Calu3 (cell line): ENCODE measurements at regions of chr22 and their contacts with region 1.

Region 1: GRCh38 chr22:32202539-32203180 is 2.2 kb downstream of the RFPL2 start:
- DNase-seq: peak; percentile 79
- H3K4me3 Mint-ChIP-seq: peak overlapping the region; percentile 84
- H3K27ac Mint-ChIP-seq: no peak overlapping the region
- H3K4me1 Mint-ChIP-seq: peaks cover 54% of the 10 kb centered on the region
- H3K27me3 Mint-ChIP-seq: peaks cover 33% of the 10 kb centered on the region
- CTCF ChIP-seq: peak; percentile 53

Region 2: GRCh38 chr22:31977141-31977841 is 225.4 kb before region 1 on chr22:
- CTCF ChIA-PET with region 1: no interaction called
- intact Hi-C with region 1: loop called (anchors 2 kb)
- DNase-seq: peak; percentile 91
- H3K4me3 Mint-ChIP-seq: no peak overlapping the region
- H3K27ac Mint-ChIP-seq: peak overlapping the region; percentile 3
- H3K4me1 Mint-ChIP-seq: peaks cover 32% of the 10 kb centered on the region
- H3K27me3 Mint-ChIP-seq: no peaks in the 10 kb centered on the region
- CTCF ChIP-seq: peak; percentile 89

Region 3: DNA sequence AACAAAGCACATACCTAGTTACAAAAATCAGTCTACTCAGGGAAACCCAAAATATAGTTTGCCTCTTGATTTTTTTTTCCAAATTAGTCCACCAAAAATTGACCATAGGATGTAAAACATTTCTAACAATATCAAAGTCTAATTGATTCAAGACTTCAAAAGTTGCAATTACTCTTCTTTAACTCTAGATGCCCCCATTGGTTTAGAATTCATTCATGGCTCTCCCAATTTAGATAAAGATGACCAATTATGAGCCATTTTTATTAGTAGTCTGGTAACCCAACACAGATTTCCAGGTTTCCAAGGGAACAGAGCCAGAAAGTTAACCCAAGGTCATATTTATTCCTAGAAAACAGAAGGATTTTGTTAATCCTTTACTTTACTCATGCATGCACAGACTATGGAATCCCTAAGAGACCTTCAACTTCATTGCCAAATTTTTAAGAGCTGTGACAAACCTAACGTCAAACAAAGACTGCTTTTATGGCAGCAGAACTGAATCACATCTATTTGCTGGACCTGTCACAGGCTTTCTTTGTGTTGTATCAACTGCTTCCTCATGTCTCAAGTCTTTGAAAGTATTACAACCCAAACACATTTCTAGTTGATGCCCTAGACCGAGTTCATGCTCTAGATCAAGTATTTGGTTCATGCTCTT is 98.9 kb before region 1 on chr22:
- CTCF ChIA-PET with region 1: interaction called, 5 read pairs
- intact Hi-C with region 1: loop called (anchors 1 kb)
- DNase-seq: no peak
- H3K4me3 Mint-ChIP-seq: no peak overlapping the region
- H3K27ac Mint-ChIP-seq: no peak overlapping the region
- H3K4me1 Mint-ChIP-seq: peaks cover 18% of the 10 kb centered on the region
- H3K27me3 Mint-ChIP-seq: no peaks in the 10 kb centered on the region
- CTCF ChIP-seq: peak; percentile 40

Region 4: DNA sequence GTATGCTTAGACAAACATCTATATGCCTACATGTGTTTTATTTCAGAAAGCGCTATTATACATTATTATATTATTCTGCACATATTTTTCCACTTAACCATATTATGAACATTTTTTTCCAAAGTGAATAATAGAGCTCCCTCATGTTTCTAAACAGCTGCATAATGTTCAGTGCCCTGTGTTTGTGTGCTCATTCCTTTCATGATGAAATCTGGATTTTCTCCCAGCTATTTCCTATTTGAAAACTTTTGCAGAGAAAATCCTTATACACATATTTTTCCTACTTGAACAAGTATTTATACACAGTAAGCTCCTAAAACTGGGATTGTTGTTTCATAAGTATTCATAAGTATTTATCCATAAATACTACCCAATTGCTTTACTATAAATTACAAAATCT is 20.3 kb after region 1 on chr22:
- CTCF ChIA-PET with region 1: no interaction called
- intact Hi-C with region 1: no loop called
- DNase-seq: no peak
- H3K4me3 Mint-ChIP-seq: no peak overlapping the region
- H3K27ac Mint-ChIP-seq: no peak overlapping the region
- H3K4me1 Mint-ChIP-seq: no peaks in the 10 kb centered on the region
- H3K27me3 Mint-ChIP-seq: no peaks in the 10 kb centered on the region
- CTCF ChIP-seq: no peak

Region 5: DNA sequence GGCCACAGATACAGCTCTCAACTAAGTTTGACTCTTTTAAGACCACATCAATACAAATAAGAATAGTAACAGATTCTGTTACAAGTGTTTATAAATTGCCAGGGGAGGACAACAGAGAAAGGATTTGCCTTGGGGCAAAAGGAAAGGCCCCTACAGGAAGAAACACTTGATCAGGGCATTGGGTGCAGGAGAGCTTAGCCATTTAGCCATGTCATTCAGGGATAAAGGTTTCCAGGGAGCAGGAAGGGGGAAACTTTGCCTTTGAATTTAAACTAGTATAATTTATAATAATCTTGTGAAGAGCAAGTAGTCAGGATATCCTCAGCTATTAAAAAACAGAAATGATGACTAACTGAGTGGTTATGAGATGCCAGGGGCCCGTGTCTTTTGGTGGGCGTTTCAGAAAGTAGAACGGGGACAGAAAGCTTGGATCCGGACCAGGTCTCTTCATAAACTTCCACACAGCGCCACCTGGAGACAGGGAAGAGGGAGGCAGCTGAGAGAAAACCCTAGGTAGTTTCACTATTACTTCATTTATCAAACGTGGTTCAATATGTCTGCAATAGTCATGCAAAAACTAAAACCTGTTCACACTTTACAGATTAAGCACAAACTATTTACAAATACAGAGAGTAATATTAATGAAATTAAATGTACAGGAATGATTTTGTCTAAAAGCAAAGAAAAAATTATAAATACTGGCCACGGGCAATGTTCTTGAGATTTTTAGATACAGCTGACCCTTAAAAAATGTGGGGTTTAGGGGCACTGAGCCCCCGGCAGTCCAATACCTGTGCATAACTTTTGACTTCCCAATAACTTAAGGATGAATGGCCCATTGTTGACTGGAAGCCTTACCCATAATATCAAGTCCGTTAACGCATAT is 63.5 kb after region 1 on chr22:
- CTCF ChIA-PET with region 1: interaction called, 27 read pairs
- intact Hi-C with region 1: loop called (anchors 1 kb)
- DNase-seq: peak; percentile 77
- H3K4me3 Mint-ChIP-seq: peak overlapping the region; percentile 14
- H3K27ac Mint-ChIP-seq: no peak overlapping the region
- H3K4me1 Mint-ChIP-seq: no peaks in the 10 kb centered on the region
- H3K27me3 Mint-ChIP-seq: peaks cover 12% of the 10 kb centered on the region
- CTCF ChIP-seq: peak; percentile 71

Region 6: DNA sequence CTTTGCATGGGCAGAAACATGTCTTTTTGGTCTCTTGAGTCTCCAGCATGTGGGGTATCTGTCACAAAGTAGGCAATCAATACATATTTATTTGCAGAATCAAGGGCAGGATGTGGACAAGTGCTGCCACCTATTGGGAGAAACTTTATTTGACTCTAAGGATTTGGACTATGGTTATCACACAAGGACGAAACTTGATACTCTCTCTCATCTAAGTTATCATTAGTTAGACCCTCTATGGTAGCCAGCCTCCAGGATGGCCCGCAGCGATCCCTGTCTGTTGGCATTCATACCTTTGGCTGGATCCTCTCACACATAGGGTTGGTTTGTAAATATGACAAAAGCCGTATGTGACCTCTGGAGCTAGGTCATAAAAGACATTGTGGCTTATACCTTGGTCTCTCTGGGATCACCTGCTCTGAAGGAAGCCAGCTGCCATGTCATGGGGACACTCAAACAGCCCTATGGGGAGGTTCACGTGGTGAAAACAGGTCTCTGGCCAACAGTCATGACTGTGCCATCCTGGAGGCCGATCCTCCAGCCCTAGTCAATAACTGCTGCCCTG is 270.8 kb after region 1 on chr22:
- CTCF ChIA-PET with region 1: interaction called, 4 read pairs
- intact Hi-C with region 1: loop called (anchors 2 kb)
- DNase-seq: peak; percentile 63
- H3K4me3 Mint-ChIP-seq: peak overlapping the region; percentile 76
- H3K27ac Mint-ChIP-seq: no peak overlapping the region
- H3K4me1 Mint-ChIP-seq: peaks cover 14% of the 10 kb centered on the region
- H3K27me3 Mint-ChIP-seq: no peaks in the 10 kb centered on the region
- CTCF ChIP-seq: peak; percentile 62

Region 7: DNA sequence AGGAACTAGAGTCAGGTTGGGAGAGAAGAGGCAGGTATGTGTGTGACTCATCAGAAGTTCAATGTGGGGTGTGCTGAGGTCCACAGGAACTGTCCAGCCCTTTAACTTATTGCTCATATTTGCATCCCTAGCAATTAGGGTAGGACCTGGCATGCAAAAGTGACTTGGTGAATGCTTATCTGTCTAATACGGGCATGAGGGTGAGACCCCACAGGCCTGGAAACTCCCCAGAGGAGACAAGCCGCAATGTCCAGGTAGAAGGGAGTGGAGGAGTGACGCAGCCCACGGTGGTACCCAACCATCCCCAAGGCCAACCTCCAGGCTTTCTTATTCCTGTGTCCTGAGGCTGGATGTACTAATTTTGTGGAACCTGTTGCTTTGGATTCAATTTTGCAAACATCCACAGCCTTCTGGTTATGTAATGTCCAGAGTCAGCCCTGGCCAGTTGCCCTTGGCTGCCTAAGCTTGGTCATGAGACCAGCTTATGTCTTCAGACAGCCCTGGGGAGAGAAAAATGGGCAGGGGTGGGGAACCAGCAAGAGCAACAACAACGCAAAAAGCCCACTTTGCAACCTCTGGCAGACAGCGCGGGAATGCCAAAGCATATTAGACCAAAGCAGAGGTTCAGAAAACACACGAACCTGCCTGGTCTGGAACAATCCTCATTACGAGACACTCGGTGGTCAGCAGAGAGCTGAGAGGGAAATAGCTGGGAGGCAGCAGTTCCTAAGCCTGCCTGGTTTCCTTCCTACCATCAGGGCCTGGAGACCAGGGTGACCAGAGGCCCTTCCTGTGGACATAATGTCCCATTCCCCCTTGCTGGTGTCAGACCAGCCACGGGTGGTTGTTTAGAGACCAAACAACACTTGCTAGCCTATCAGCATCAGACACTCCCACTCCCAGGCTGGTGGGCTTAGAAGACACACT is 648.2 kb after region 1 on chr22:
- CTCF ChIA-PET with region 1: no interaction called
- intact Hi-C with region 1: no loop called
- DNase-seq: no peak
- H3K4me3 Mint-ChIP-seq: no peak overlapping the region
- H3K27ac Mint-ChIP-seq: no peak overlapping the region
- H3K4me1 Mint-ChIP-seq: no peaks in the 10 kb centered on the region
- H3K27me3 Mint-ChIP-seq: peaks cover 21% of the 10 kb centered on the region
- CTCF ChIP-seq: no peak